B cell (primary cell): ENCODE measurements at regions of chr1 and their contacts with region 1.

Region 1: DNA sequence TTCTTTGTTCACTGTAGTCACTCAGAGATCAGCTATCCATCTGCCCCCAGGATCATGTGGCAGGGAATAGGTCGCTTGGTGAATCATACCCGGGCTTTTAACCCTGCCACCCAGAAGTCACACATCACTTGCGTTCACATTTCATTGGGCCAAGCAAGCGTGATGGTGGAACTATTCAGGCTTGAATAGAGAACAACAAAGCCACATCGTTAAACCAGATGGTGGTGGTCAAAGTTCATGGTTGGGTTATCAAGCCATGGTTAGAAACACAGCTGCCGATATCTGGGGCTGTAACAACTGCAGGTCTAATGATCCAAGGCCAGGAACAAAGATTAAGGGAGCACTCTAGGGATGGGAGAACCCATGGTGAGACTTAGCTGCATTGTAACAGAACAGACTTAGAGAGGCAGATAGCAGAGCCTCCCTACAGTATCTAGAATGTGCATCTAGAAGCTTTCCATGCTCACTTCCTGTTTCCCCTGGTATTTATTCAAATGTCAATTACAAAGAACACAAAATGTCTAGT is 40.0 kb upstream of the PTPRC start:
- DNase-seq: peak; percentile 90
- ATAC-seq: peak; percentile 81
- H3K4me3 ChIP-seq: peak overlapping the region; percentile 44 to 70 (median 64)
- H3K4me3 Mint-ChIP-seq: peak overlapping the region; percentile 97
- H3K27ac ChIP-seq: peak overlapping the region; percentile 94 to 96
- H3K27ac Mint-ChIP-seq: peak overlapping the region; percentile 99
- H3K4me1 ChIP-seq: peaks cover 75 to 80% of the 10 kb centered on the region in 2 donors
- H3K4me1 Mint-ChIP-seq: peaks cover 81% of the 10 kb centered on the region
- H3K27me3 ChIP-seq: no peaks in the 10 kb centered on the region
- H3K27me3 Mint-ChIP-seq: no peaks in the 10 kb centered on the region
- CTCF ChIP-seq: no peak

Region 2: GRCh38 chr1:198520524-198521254 is 78.2 kb before region 1 on chr1:
- CTCF ChIA-PET with region 1: interaction called, 3 read pairs
- POLR2A ChIA-PET with region 1: interaction called, 4 read pairs
- intact Hi-C with region 1: loop called (anchors 2 kb)
- DNase-seq: peak; percentile 43
- ATAC-seq: peak; percentile 64
- H3K4me3 ChIP-seq: peak overlapping the region in 1 of 5 experiments; percentile 45
- H3K4me3 Mint-ChIP-seq: peak overlapping the region; percentile 67
- H3K27ac ChIP-seq: peak overlapping the region; percentile 35 to 59
- H3K27ac Mint-ChIP-seq: peak overlapping the region; percentile 37
- H3K4me1 ChIP-seq: peaks cover 20 to 34% of the 10 kb centered on the region in 2 donors
- H3K4me1 Mint-ChIP-seq: peaks cover 57% of the 10 kb centered on the region
- H3K27me3 ChIP-seq: no peaks in the 10 kb centered on the region
- H3K27me3 Mint-ChIP-seq: no peaks in the 10 kb centered on the region
- CTCF ChIP-seq: no peak

Region 3: DNA sequence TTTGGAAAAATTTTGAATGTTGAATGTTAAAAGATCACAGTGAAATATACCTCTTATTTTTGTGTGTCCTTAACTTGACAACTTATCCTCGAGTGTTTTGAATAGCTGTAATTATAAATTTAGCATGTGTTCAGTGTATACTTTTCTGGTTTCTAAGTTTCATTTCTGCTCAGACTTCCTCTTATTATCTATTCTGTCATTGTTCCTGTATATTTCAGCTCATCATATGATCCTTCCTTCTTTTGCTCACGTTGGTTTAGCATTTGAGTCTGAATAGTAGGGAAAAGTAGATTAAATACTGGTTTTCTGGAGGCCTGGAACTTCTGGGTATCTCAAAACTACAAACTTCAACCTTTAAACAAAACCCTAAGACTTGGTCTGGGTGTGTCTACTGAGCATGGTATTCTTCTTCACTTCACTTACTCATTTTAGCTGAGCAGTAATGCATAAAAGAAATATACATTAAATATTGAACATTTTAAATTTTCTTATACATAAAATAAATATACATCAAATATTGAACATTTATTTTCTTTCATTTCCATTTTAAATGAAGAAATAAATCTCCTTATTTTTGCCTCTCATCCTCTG is 55.1 kb before region 1 on chr1:
- CTCF ChIA-PET with region 1: interaction called, 4 read pairs
- POLR2A ChIA-PET with region 1: interaction called, 4 read pairs
- intact Hi-C with region 1: loop called (anchors 2 kb)
- DNase-seq: peak; percentile 73
- ATAC-seq: peak; percentile 78
- H3K4me3 ChIP-seq: peak overlapping the region in 1 of 5 experiments; percentile 44
- H3K4me3 Mint-ChIP-seq: peak overlapping the region; percentile 77
- H3K27ac ChIP-seq: peak overlapping the region; percentile 77 to 81
- H3K27ac Mint-ChIP-seq: peak overlapping the region; percentile 94
- H3K4me1 ChIP-seq: peaks cover 37 to 57% of the 10 kb centered on the region in 2 donors
- H3K4me1 Mint-ChIP-seq: peaks cover 55% of the 10 kb centered on the region
- H3K27me3 ChIP-seq: no peaks in the 10 kb centered on the region
- H3K27me3 Mint-ChIP-seq: no peaks in the 10 kb centered on the region
- CTCF ChIP-seq: no peak

Region 4: GRCh38 chr1:198575798-198576641 is 22.8 kb before region 1 on chr1:
- CTCF ChIA-PET with region 1: interaction called, 6 read pairs
- POLR2A ChIA-PET with region 1: interaction called, 5 read pairs
- intact Hi-C with region 1: loop called (anchors 2 kb)
- DNase-seq: peak; percentile 61
- ATAC-seq: peak; percentile 63
- H3K4me3 ChIP-seq: peak overlapping the region in 1 of 5 experiments; percentile 45
- H3K4me3 Mint-ChIP-seq: peak overlapping the region; percentile 30
- H3K27ac ChIP-seq: peak overlapping the region; percentile 51 to 79
- H3K27ac Mint-ChIP-seq: peak overlapping the region; percentile 81
- H3K4me1 ChIP-seq: peaks cover 21 to 32% of the 10 kb centered on the region in 2 donors
- H3K4me1 Mint-ChIP-seq: peaks cover 29% of the 10 kb centered on the region
- H3K27me3 ChIP-seq: no peaks in the 10 kb centered on the region
- H3K27me3 Mint-ChIP-seq: no peaks in the 10 kb centered on the region
- CTCF ChIP-seq: peak; percentile 9

Region 5: GRCh38 chr1:198620951-198621824 is 22.3 kb after region 1 on chr1:
- CTCF ChIA-PET with region 1: interaction called, 44 read pairs
- POLR2A ChIA-PET with region 1: interaction called, 87 read pairs
- intact Hi-C with region 1: loop called (anchors 1 kb)
- DNase-seq: peak; percentile 92
- ATAC-seq: peak; percentile 67
- H3K4me3 ChIP-seq: peak overlapping the region; percentile 27 to 70 (median 52)
- H3K4me3 Mint-ChIP-seq: peak overlapping the region; percentile 86
- H3K27ac ChIP-seq: peak overlapping the region; percentile 90 to 95
- H3K27ac Mint-ChIP-seq: peak overlapping the region; percentile 98
- H3K4me1 ChIP-seq: peaks cover 69 to 75% of the 10 kb centered on the region in 2 donors
- H3K4me1 Mint-ChIP-seq: peaks cover 80% of the 10 kb centered on the region
- H3K27me3 ChIP-seq: no peaks in the 10 kb centered on the region
- H3K27me3 Mint-ChIP-seq: no peaks in the 10 kb centered on the region
- CTCF ChIP-seq: no peak